ENCODE measurements at regions of chr17 and their contacts with region 1.

Region 1: DNA sequence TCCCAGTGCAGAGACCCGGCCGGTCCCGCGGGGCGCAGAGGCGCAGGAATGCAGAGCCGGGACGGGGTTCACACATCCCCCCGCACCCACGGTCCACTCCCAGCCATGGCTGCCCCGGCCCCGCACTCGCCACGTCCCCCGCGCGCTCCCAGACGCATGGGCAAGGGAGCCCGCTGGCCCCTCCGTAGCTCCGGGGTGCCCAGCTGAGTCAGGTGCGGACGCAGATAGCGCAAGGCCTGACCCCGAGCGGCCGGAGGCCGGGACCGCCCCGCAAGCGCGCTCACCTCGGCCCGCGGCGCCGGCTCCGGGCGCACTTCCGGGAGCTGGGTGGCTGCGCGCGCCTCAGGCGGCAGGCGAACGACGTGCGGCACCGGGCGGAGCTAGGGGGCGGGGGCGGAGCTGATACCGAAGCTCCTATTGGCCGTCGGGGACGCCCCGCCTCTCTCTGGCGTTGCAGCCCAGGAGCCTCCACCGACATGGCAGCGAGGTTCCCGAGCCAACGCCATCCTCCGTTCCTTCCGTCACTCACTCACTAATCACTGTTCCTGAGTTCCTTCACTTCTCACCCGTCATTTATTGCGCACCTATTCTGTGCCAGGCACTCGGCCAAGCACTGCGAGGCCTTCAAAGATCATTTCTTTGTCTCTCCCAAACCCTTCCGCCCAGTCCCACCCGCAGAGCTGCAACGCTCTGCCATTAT is at the start of gene ZNF18:
- DNase-seq: peak; percentile 98 to 99
- ATAC-seq: peak; percentile 97 to 100 (median 99)
- H3K4me3 ChIP-seq: peak within 1 kb of the TSS; percentile 96
- H3K27ac ChIP-seq: peak within 1 kb of the TSS; percentile 93
- H3K4me1 ChIP-seq: peaks cover 10% of the 10 kb centered on the region
- H3K27me3 ChIP-seq: no peaks in the 10 kb centered on the region
- CTCF ChIP-seq: no peak
- total RNA-seq, gene ZNF18: 3.4 to 6.3 (median 4.8) TPM

Region 2: GRCh38 chr17:10697092-10698081 is 1299.9 kb before region 1 on chr17 and contains the starts of genes ADPRM and SCO1:
- intact Hi-C with region 1: loop called in 1 of 2 experiments (anchors 10 kb)
- DNase-seq: peak; percentile 95 to 97
- ATAC-seq: peak; percentile 96 to 98 (median 98)
- H3K4me3 ChIP-seq: peak within 1 kb of the TSS; percentile 96
- H3K27ac ChIP-seq: peak within 1 kb of the TSS; percentile 95
- H3K4me1 ChIP-seq: peaks cover 7% of the 10 kb centered on the region
- H3K27me3 ChIP-seq: no peaks in the 10 kb centered on the region
- CTCF ChIP-seq: peak; percentile 44
- total RNA-seq, gene ADPRM: 8.9 to 15.8 (median 10.6) TPM
- total RNA-seq, gene SCO1: 25.9 to 36.1 (median 27.5) TPM

Region 3: DNA sequence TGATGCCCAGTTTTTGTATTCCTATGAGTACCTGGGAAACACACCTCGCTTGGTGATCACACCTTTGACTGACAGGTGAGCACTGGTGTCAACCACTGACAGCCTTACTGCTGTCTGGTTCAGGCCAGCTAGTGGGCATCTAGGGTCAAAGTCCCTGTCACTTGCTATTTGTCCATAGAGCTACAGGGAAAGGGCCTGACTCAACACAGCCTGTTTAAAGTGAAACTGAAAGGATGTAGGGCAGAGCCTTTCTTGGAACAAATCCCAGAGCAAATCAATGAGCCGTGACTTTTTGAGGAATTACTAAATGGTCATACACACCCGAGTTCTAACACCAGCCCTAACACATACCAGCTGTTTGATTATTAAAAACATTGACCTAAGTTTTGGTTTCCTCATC is 292.2 kb before region 1 on chr17:
- intact Hi-C with region 1: no loop called
- DNase-seq: no peak
- ATAC-seq: no peak
- H3K4me3 ChIP-seq: no peak overlapping the region
- H3K27ac ChIP-seq: no peak overlapping the region
- H3K4me1 ChIP-seq: no peaks in the 10 kb centered on the region
- H3K27me3 ChIP-seq: no peaks in the 10 kb centered on the region
- CTCF ChIP-seq: no peak

Region 4: DNA sequence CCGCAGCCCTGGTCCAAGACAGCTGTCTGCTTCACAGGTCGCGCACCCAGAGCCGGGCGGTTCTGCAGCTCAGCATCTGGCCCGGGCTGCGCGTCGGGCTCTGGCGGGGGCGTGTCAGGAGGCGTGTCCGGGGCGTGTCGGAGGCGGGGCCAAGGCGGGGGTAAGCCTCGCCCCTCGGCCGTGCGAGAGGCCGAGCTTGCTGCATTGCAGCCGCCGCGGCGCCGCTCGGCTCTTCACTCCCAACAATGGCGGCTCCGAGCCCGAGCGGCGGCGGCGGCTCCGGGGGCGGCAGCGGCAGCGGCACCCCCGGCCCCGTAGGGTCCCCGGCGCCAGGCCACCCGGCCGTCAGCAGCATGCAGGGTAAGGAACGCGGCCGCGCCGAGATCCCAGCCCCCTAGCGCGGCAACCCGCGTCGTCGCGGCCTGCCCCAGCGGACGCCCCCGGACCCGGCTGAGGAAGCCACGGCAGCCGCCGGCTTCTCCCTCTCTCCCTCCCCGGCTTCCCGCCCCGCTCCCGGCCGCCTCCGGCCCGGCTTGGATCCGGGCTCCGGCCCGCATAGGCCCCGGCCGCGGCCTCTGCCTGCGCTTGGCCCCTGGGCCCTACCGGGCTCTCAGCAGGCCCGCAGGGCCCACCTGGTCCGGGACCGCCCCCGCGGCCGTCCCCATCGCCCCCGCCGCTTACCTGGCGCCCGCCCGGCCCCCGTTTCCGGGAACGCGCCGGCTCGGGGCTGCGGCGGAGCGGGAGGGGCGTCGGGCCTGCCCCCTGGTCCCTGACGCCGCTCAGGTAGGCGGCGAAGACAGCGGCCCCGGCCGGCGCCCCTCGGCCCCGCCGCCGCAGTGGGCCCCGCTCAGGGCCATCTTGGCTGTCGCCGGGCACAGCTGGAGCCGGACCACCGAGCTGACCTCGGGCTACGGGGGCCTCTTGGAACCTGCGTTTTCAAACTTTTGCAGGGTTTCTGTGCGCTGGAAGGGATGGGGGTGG is 23.6 kb after region 1 on chr17 and contains the start of gene MAP2K4:
- intact Hi-C with region 1: loop called (anchors 2 kb)
- DNase-seq: peak; percentile 91 to 96
- ATAC-seq: peak; percentile 100
- H3K4me3 ChIP-seq: peak within 1 kb of the TSS; percentile 92
- H3K27ac ChIP-seq: peak within 1 kb of the TSS; percentile 88
- H3K4me1 ChIP-seq: peaks cover 41% of the 10 kb centered on the region
- H3K27me3 ChIP-seq: no peaks in the 10 kb centered on the region
- CTCF ChIP-seq: no peak
- total RNA-seq, gene MAP2K4: 26.2 to 34.2 (median 31.6) TPM

Measured in psoas muscle (tissue), 8 donors.